Natural killer cell (primary cell): ENCODE measurements at regions of chr1 and their contacts with region 1.

Region 1: DNA sequence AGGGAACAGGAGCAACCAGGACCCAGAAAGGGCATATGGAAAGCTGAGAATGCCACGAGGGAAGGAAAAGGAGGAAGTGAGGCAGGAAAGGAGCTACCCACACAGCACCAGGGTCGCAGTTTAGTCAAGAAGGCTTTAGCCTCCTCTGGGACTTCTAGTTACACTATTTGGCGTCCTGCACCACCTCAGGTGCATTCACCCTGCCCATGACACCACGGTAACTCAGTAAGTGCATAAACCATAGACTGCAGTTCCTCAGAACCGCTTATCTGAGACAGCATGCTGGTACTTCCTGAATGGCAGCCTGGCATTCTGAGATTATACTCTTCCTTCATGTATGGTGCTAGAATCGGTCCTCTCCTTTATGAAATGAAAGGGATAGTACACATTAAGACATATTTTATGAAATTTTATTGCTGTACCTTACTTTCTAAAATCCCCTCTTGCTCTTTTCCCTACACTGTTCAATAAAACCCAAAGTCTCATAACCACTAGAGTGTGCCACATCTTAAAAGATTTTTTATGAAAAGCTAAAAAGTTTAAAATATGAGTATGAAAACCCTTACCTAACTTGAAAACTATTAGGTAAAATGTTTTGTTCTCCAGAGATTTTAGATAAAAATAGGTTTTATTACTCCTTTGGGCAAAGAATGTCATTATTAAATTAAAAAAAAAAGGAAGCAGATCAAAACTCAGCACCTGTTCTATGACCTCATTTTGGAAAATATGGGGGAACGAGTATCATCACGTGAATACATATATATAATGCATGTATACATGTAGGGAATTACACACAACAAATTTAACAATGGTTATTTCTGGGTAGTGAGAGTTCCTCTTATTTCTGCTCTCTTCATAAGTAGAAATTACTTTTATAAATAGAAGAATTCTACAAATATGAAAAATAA is 67.3 kb downstream of the VAV3 start:
- DNase-seq: peak; percentile 21 to 45
- ATAC-seq: peak; percentile 67 to 70 (median 68)
- H3K4me3 ChIP-seq: no peak overlapping the region
- H3K4me3 Mint-ChIP-seq: peak overlapping the region; percentile 70
- H3K27ac ChIP-seq: peak overlapping the region; percentile 66
- H3K27ac Mint-ChIP-seq: peak overlapping the region; percentile 89 to 91
- H3K4me1 ChIP-seq: peaks cover 22% of the 10 kb centered on the region
- H3K4me1 Mint-ChIP-seq: peaks cover 77 to 85% of the 10 kb centered on the region in 2 donors
- H3K27me3 ChIP-seq: no peaks in the 10 kb centered on the region
- H3K27me3 Mint-ChIP-seq: no peaks in the 10 kb centered on the region
- CTCF ChIP-seq: no peak

Region 2: GRCh38 chr1:107804134-107804533 is 93.6 kb before region 1 on chr1:
- intact Hi-C with region 1: no loop called
- DNase-seq: peak in 1 of 2 donors; percentile 44
- ATAC-seq: peak; percentile 64 to 67 (median 64)
- H3K4me3 ChIP-seq: no peak overlapping the region
- H3K4me3 Mint-ChIP-seq: peak overlapping the region; percentile 68
- H3K27ac ChIP-seq: peak overlapping the region; percentile 57
- H3K27ac Mint-ChIP-seq: peak overlapping the region; percentile 35 to 73
- H3K4me1 ChIP-seq: peaks cover 13% of the 10 kb centered on the region
- H3K4me1 Mint-ChIP-seq: peaks cover 58 to 59% of the 10 kb centered on the region in 2 donors
- H3K27me3 ChIP-seq: no peaks in the 10 kb centered on the region
- H3K27me3 Mint-ChIP-seq: no peaks in the 10 kb centered on the region
- CTCF ChIP-seq: no peak

Region 3: DNA sequence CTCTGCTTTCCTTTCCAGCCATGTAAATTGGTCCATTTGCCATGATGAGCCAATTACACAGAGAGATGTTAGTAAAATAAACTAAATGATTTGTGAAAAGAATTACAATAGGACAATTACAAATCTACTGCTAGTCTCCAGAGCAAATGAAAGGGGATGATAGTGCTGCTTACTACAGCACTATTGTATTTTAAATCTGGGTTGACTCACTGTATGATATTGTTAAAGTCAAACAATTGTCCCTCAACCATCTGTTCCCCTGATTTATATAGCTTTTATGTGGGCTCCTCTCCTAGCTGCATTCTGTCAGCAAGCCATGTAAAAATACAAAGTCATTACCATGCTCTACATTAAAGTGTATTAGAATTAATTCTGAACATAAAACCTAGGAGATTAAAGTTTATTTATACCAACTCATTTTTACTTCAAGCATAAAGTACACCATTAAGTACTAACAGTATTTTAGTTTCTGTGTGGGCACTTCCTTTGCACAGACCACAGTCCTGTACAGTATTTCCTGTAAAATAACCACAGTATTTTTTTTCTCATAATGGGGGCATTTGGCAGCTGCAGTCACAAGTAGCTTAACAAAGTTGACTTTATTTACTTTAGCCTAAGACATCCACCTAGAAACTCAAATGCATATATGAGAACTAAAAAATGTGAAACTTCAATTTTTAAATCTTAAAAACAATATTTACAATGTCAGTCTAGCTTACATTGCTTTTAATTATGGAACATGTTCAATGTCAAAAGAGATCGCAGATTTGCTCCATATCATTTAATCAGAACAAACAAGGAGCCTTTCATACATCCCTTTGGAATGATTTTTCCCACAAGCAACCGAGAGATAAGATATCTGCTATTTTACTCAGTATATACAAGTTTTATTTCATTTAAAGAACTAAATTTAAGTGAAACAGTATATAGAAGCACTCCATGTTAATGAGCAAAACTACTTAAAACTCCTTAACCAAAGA is 68.3 kb before region 1 on chr1:
- intact Hi-C with region 1: loop called (anchors 10 kb)
- DNase-seq: peak in 1 of 2 donors; percentile 56
- ATAC-seq: peak; percentile 82 to 96 (median 92)
- H3K4me3 ChIP-seq: no peak overlapping the region
- H3K4me3 Mint-ChIP-seq: peak overlapping the region; percentile 88
- H3K27ac ChIP-seq: peak overlapping the region; percentile 65
- H3K27ac Mint-ChIP-seq: peak overlapping the region; percentile 87 to 90
- H3K4me1 ChIP-seq: peaks cover 37% of the 10 kb centered on the region
- H3K4me1 Mint-ChIP-seq: peaks cover 82 to 88% of the 10 kb centered on the region in 2 donors
- H3K27me3 ChIP-seq: no peaks in the 10 kb centered on the region
- H3K27me3 Mint-ChIP-seq: no peaks in the 10 kb centered on the region
- CTCF ChIP-seq: no peak

Region 4: GRCh38 chr1:107840725-107841124 is 57.0 kb before region 1 on chr1:
- intact Hi-C with region 1: loop called (anchors 5 kb)
- DNase-seq: peak in 1 of 2 donors; percentile 46
- ATAC-seq: peak; percentile 53 to 70 (median 53)
- H3K4me3 ChIP-seq: peak overlapping the region; percentile 13
- H3K4me3 Mint-ChIP-seq: peak overlapping the region; percentile 75
- H3K27ac ChIP-seq: peak overlapping the region; percentile 82
- H3K27ac Mint-ChIP-seq: peak overlapping the region; percentile 87 to 89
- H3K4me1 ChIP-seq: peaks cover 31% of the 10 kb centered on the region
- H3K4me1 Mint-ChIP-seq: peaks cover 93 to 96% of the 10 kb centered on the region in 2 donors
- H3K27me3 ChIP-seq: no peaks in the 10 kb centered on the region
- H3K27me3 Mint-ChIP-seq: no peaks in the 10 kb centered on the region
- CTCF ChIP-seq: no peak

Region 5: DNA sequence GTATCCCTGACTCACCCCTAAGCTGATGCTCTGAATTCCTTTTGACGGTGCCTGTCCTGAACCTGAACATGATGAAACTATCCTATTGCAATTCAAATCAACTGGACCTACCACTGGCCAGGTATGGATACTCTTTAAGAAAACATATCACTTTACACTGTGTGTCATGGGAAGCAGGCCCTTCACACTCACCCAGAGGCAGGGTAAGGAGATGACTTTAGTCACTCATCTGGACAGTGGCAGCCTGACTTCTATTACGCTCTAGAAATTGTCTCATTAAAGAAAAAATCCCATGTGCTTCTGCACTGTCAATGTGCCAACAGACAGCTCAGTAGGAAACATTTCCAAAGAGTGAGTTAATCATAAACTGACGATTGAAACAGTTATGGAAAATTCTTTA is 27.0 kb before region 1 on chr1:
- intact Hi-C with region 1: loop called (anchors 1 kb)
- DNase-seq: no peak
- ATAC-seq: peak in 1 of 3 donors; percentile 52
- H3K4me3 ChIP-seq: no peak overlapping the region
- H3K4me3 Mint-ChIP-seq: peak overlapping the region; percentile 49
- H3K27ac ChIP-seq: peak overlapping the region; percentile 76
- H3K27ac Mint-ChIP-seq: peak overlapping the region; percentile 89 to 91
- H3K4me1 ChIP-seq: peaks cover 30% of the 10 kb centered on the region
- H3K4me1 Mint-ChIP-seq: peaks cover 70 to 87% of the 10 kb centered on the region in 2 donors
- H3K27me3 ChIP-seq: no peaks in the 10 kb centered on the region
- H3K27me3 Mint-ChIP-seq: no peaks in the 10 kb centered on the region
- CTCF ChIP-seq: no peak

Region 6: DNA sequence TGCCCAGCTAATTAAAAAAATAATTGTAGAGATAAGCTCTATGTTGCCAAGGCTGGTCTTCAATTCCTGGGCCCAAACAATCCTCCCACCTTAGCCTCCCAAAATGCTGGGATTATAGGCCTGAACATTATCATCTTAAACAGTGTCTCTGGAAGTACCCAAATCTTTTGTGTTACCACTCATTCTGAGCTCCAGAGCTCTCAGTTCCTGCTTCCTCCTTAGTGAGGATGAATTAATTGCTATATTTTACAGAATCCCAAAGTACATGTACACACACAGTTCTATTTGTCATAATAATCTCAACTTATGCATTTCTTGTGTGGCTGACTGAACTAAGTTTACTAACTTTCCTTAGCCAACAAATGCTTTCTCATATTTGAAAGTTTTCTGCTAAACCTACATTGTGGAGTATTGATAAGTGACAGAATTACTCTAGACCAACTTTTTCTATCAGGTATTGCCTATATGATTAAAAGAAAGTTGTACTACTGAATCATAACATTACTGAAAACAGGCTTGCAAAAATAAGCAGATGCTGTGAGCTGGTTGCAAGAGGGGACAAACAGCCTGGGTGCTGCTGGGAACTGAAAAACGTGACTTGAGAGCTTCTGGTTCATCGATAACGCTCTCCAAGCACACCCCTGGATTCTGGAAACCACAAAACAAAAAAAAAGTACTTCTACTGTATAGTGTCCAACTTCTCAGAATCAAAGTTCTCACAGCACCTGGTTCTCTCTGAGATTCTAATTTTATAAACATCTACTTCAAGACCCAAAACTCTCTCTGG is 52.0 kb after region 1 on chr1:
- intact Hi-C with region 1: loop called (anchors 5 kb)
- DNase-seq: no peak
- ATAC-seq: no peak
- H3K4me3 ChIP-seq: no peak overlapping the region
- H3K4me3 Mint-ChIP-seq: peak overlapping the region; percentile 5
- H3K27ac ChIP-seq: peak overlapping the region; percentile 7
- H3K27ac Mint-ChIP-seq: peak overlapping the region; percentile 29 to 84
- H3K4me1 ChIP-seq: peaks cover 32% of the 10 kb centered on the region
- H3K4me1 Mint-ChIP-seq: peaks cover 18 to 29% of the 10 kb centered on the region in 2 donors
- H3K27me3 ChIP-seq: no peaks in the 10 kb centered on the region
- H3K27me3 Mint-ChIP-seq: no peaks in the 10 kb centered on the region
- CTCF ChIP-seq: no peak

Region 7: DNA sequence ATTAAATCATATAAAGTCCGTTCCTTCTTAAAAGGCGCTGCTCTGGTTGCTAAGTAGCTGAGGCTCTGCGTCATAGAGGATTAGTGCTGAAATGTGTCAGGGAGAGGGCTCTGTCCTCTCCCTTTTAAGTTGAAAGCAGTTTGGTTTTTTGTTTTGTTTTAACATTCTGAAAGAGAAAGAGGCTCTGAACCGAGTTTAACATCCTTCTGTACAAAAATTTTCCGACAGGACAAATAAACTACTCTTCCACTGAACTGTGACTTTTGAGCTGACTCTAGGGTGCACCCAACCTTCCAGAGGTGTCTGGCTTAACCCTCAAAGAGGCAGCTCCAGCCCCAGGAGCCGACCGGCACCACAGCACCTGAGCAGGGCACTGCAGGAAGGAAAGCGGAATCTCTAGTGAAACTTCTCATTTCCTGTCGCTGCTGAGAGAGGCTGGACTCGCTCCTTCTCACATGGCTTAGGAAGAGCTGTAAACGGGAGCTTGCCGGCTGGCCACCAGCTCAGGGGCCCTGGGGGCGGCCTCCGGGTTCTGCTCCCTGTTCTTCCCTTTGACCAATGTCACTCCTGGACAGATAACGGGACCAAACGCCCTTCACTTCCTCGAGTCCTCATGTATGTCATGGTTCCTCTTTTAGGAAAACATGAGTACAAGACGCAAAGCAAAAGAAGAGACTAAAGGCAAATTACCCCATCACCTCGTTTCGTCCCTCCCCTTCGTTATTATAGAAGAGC is 66.1 kb after region 1 on chr1:
- intact Hi-C with region 1: loop called (anchors 2 kb)
- DNase-seq: peak; percentile 47 to 75
- ATAC-seq: peak; percentile 69 to 82 (median 70)
- H3K4me3 ChIP-seq: peak overlapping the region; percentile 84
- H3K4me3 Mint-ChIP-seq: peak overlapping the region; percentile 98
- H3K27ac ChIP-seq: peak overlapping the region; percentile 83
- H3K27ac Mint-ChIP-seq: peak overlapping the region; percentile 95 to 97
- H3K4me1 ChIP-seq: peaks cover 18% of the 10 kb centered on the region
- H3K4me1 Mint-ChIP-seq: peaks cover 47 to 55% of the 10 kb centered on the region in 2 donors
- H3K27me3 ChIP-seq: no peaks in the 10 kb centered on the region
- H3K27me3 Mint-ChIP-seq: no peaks in the 10 kb centered on the region
- CTCF ChIP-seq: no peak